ENCODE measurements at regions of chr10 and their contacts with region 1.

Region 1: GRCh38 chr10:64733980-64734379 is 1212.8 kb downstream of the REEP3 start:
- DNase-seq: no peak
- ATAC-seq: peak; percentile 79
- H3K4me3 ChIP-seq: no peak overlapping the region
- H3K27ac ChIP-seq: no peak overlapping the region
- H3K4me1 ChIP-seq: no peaks in the 10 kb centered on the region
- H3K27me3 ChIP-seq: no peaks in the 10 kb centered on the region
- CTCF ChIP-seq: peak; percentile 17 to 47 (median 23); a peak in 3 of 6 replicates
- EP300 ChIP-seq: no peak
- POLR2A ChIP-seq: no peak
- RAD21 ChIP-seq: peak; percentile 59

Region 2: GRCh38 chr10:64750672-64751071 is 16.7 kb after region 1 on chr10:
- CTCF ChIA-PET with region 1: no interaction called
- POLR2A ChIA-PET with region 1: no interaction called
- RAD21 ChIA-PET with region 1: no interaction called
- SMC1A ChIA-PET with region 1: interaction called, 16 read pairs
- in situ Hi-C with region 1: no loop called
- intact Hi-C with region 1: no loop called
- DNase-seq: no peak
- ATAC-seq: no peak
- H3K4me3 ChIP-seq: no peak overlapping the region
- H3K27ac ChIP-seq: no peak overlapping the region
- H3K4me1 ChIP-seq: no peaks in the 10 kb centered on the region
- H3K27me3 ChIP-seq: no peaks in the 10 kb centered on the region
- CTCF ChIP-seq: no peak
- EP300 ChIP-seq: no peak
- POLR2A ChIP-seq: no peak
- RAD21 ChIP-seq: no peak

Region 3: GRCh38 chr10:64846700-64847099 is 112.7 kb after region 1 on chr10:
- CTCF ChIA-PET with region 1: no interaction called
- POLR2A ChIA-PET with region 1: no interaction called
- RAD21 ChIA-PET with region 1: no interaction called
- SMC1A ChIA-PET with region 1: no interaction called
- in situ Hi-C with region 1: no loop called
- intact Hi-C with region 1: no loop called
- DNase-seq: no peak
- ATAC-seq: no peak
- H3K4me3 ChIP-seq: no peak overlapping the region
- H3K27ac ChIP-seq: no peak overlapping the region
- H3K4me1 ChIP-seq: no peaks in the 10 kb centered on the region
- H3K27me3 ChIP-seq: no peaks in the 10 kb centered on the region
- CTCF ChIP-seq: no peak
- EP300 ChIP-seq: no peak
- POLR2A ChIP-seq: no peak
- RAD21 ChIP-seq: no peak

Measured in GM12878 (cell line).